ENCODE measurements at regions of chr11 and their contacts with region 1.

Region 1: GRCh38 chr11:30322826-30323710 is at the start of gene ARL14EP:
- DNase-seq: peak; percentile 84
- H3K4me3 Mint-ChIP-seq: peak within 1 kb of the TSS; percentile 99
- H3K27ac Mint-ChIP-seq: peak within 1 kb of the TSS; percentile 99
- H3K4me1 Mint-ChIP-seq: peaks cover 53% of the 10 kb centered on the region
- H3K27me3 Mint-ChIP-seq: peaks cover 17% of the 10 kb centered on the region
- total RNA-seq, gene ARL14EP: 47.6 and 48.8 TPM in 2 replicates

Region 2: DNA sequence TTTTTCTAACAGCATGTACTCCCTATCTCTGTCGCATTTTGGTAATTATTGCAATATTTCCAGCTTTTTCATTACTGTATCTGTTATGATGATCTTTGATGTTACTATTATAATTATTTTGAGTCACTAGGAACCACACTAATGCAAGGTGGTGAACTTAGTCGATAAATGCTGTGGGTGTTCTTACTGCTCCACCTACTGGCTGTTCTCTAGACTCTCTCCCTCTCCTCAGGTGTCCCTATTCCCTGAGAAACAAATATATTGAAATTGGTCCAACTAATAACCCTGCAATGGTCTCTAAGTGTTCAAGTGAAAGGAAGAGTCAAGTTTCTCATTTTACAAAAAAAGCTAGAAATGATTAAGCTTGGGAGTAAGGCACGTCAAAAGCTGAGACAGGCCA is 10.3 kb after region 1 on chr11:
- intact Hi-C with region 1: loop called (anchors 2 kb)
- DNase-seq: no peak
- H3K4me3 Mint-ChIP-seq: no peak overlapping the region
- H3K27ac Mint-ChIP-seq: peak overlapping the region; percentile 52
- H3K4me1 Mint-ChIP-seq: peaks cover 38% of the 10 kb centered on the region
- H3K27me3 Mint-ChIP-seq: no peaks in the 10 kb centered on the region

Region 3: GRCh38 chr11:30346068-30346688 is 23.1 kb after region 1 on chr11:
- intact Hi-C with region 1: loop called (anchors 2 kb)
- DNase-seq: no peak
- H3K4me3 Mint-ChIP-seq: no peak overlapping the region
- H3K27ac Mint-ChIP-seq: no peak overlapping the region
- H3K4me1 Mint-ChIP-seq: peaks cover 6% of the 10 kb centered on the region
- H3K27me3 Mint-ChIP-seq: peaks cover 3% of the 10 kb centered on the region

Region 4: GRCh38 chr11:30586251-30587144 is 263.4 kb after region 1 on chr11 and contains the start of gene MPPED2:
- intact Hi-C with region 1: loop called (anchors 2 kb)
- DNase-seq: no peak
- H3K4me3 Mint-ChIP-seq: peak within 1 kb of the TSS; percentile 71
- H3K27ac Mint-ChIP-seq: no peak within 1 kb of the TSS
- H3K4me1 Mint-ChIP-seq: no peaks in the 10 kb centered on the region
- H3K27me3 Mint-ChIP-seq: peaks cover 57% of the 10 kb centered on the region
- total RNA-seq, gene MPPED2: not detected in 2 replicates

Region 5: GRCh38 chr11:31369348-31370329 is 1046.6 kb after region 1 on chr11 and contains the starts of genes DCDC1 and DNAJC24:
- intact Hi-C with region 1: loop called (anchors 5 kb)
- DNase-seq: peak; percentile 89
- H3K4me3 Mint-ChIP-seq: peak within 1 kb of the TSS; percentile 99
- H3K27ac Mint-ChIP-seq: peak within 1 kb of the TSS; percentile 95
- H3K4me1 Mint-ChIP-seq: peaks cover 25% of the 10 kb centered on the region
- H3K27me3 Mint-ChIP-seq: peaks cover 7% of the 10 kb centered on the region
- total RNA-seq, gene DCDC1: not detected in 2 replicates
- total RNA-seq, gene DNAJC24: 15.8 and 20.6 TPM in 2 replicates

Region 6: DNA sequence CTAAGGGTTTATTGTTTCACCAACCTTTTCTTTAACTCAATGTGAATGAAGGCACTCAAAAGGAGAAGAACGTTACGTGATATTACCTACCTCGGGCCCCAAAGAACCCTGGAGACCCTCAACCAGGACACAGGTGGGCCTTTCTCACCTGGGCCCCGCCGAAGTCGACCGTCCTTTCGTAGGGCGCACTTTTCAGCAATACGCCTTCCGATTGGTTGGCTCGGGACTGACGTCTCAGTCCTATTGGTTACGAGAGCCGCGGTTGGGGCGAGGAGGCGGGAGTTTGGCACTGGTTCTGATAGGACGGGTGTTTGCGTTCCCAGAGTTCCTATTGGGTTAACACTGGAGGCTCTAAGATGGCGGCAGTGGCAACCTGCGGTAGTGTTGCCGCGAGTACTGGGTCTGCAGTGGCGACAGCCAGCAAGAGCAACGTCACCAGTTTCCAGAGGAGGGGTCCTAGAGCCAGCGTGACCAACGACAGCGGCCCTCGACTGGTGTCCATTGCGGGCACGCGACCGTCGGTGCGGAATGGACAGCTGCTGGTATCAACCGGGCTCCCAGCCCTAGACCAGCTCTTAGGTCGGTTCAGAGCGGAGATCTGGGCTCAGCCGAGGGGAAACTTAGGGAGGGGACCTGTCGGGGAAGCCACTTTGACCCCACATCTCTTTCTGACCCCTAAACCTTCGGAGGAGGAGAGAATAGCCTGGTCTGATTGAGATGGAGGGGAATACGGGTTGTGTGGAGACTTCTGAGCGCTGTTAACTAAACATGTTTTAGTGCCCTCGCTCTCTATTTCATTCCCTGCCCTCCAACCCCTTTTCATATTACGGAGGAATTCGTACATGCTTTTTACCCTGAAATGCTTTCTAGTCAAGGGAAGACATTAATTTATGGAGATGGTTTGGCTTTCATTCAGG is 1186.6 kb after region 1 on chr11 and contains the starts of genes ELP4 and IMMP1L:
- intact Hi-C with region 1: loop called (anchors 2 kb)
- DNase-seq: peak; percentile 94
- H3K4me3 Mint-ChIP-seq: peak within 1 kb of the TSS; percentile 99
- H3K27ac Mint-ChIP-seq: peak within 1 kb of the TSS; percentile 94
- H3K4me1 Mint-ChIP-seq: peaks cover 47% of the 10 kb centered on the region
- H3K27me3 Mint-ChIP-seq: no peaks in the 10 kb centered on the region
- total RNA-seq, gene ELP4: 15.1 and 17.3 TPM in 2 replicates
- total RNA-seq, gene IMMP1L: 22.3 and 24.6 TPM in 2 replicates

Region 7: DNA sequence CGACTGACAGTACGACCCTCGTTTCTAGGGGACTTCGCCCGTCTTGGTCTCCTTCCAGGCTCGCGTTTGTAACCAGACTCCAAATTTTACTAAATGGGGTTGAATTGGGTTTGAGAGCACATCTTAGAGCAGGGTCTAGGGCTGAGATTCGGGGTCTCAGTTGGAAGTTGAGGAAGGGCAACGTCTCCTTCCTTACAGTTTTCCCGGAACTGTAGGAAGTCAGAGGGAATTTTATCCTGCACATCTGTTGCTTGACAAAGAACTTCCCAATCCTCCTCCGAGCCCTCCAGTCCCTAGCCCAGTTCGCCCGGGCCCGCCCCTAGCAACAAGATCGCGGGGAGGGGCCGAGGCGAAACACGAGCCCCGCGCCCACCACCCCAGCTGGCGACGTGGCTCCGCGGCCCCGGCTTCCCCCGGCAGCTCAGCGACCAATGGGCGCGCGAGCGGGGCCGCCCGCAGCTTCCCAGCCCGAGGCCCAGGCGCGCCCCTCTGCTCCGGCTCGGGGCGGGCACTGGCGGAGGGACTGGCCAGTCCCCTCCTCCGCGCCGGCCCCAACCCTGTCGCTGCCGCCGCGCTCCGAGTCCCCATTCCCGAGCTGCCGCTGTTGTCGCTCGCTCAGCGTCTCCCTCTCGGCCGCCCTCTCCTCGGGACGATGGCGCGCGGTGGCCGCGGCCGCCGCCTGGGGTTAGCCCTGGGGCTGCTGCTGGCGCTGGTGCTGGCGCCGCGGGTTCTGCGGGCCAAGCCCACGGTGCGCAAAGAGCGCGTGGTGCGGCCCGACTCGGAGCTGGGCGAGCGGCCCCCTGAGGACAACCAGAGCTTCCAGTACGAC is 1767.7 kb after region 1 on chr11 and contains the start of gene RCN1:
- intact Hi-C with region 1: loop called (anchors 10 kb)
- DNase-seq: peak; percentile 30
- H3K4me3 Mint-ChIP-seq: peak within 1 kb of the TSS; percentile 85
- H3K27ac Mint-ChIP-seq: peak within 1 kb of the TSS; percentile 88
- H3K4me1 Mint-ChIP-seq: peaks cover 41% of the 10 kb centered on the region
- H3K27me3 Mint-ChIP-seq: peaks cover 4% of the 10 kb centered on the region
- total RNA-seq, gene RCN1: 30.9 and 36.5 TPM in 2 replicates